Activated naive CD4-positive, alpha-beta T cell treated with anti-CD3 and anti-CD28 coated beads for 36 hours (primary cell): ENCODE measurements at regions of chr5 and their contacts with region 1.

Region 1: DNA sequence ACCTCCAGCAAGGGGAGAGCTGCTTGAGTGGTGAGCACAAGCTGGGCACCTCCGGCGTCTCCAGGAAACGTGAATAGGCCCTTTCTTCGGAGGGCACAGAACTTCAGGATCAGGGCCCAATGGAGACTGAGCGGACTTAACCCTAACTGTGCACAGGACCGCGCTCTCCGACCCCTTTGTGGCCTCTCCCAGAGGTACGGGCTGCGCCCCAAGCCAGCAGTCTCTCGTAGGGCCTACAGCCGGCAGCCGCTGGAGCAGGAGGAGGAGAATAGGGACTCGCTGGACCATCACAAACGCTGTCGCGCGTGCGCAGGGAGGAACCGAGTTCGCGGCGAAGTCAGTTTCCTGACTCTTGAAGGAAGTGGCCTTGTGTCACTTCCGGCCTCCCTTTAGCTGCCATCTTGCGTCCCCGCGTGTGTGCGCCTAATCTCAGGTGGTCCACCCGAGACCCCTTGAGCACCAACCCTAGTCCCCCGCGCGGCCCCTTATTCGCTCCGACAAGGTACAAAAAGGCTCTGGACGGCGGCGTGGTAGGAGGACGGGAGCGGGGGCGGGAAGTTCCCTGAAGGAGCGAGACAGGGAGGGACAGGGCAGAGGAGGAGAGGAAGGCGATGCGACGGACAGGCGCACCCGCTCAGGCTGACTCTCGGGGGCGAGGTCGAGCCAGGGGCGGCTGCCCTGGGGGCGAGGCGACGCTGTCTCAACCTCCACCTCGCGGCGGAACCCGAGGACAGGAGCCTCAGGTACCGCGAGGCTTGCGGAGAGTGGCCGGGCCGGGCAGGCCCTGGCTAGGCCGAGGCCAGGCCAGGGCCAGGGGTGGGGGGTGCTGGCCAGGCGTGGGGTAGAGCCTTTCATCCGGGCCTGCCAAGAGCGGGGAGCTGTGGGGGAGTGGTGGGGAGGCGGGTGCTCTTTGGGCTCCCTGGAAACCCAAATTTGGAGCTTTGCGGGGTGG is at the start of gene BTF3:
- DNase-seq: peak; percentile 95
- H3K4me3 Mint-ChIP-seq: peak within 1 kb of the TSS; percentile 97
- H3K27ac Mint-ChIP-seq: peak within 1 kb of the TSS; percentile 96
- H3K4me1 Mint-ChIP-seq: peaks cover 42% of the 10 kb centered on the region
- H3K27me3 Mint-ChIP-seq: peaks cover 3% of the 10 kb centered on the region
- total RNA-seq, gene BTF3: 1,100 to 1,123 TPM

Region 2: GRCh38 chr5:73540192-73540591 is 41.9 kb after region 1 on chr5:
- CTCF ChIA-PET with region 1: interaction called, 5 read pairs
- intact Hi-C with region 1: loop called (anchors 1 kb)
- DNase-seq: no peak
- H3K4me3 Mint-ChIP-seq: no peak overlapping the region
- H3K27ac Mint-ChIP-seq: no peak overlapping the region
- H3K4me1 Mint-ChIP-seq: no peaks in the 10 kb centered on the region
- H3K27me3 Mint-ChIP-seq: peaks cover 9% of the 10 kb centered on the region

Region 3: GRCh38 chr5:73565139-73565968 is 67.0 kb after region 1 on chr5 and contains the starts of genes ANKRA2 and UTP15:
- CTCF ChIA-PET with region 1: no interaction called
- intact Hi-C with region 1: loop called (anchors 1 kb)
- DNase-seq: peak; percentile 99
- H3K4me3 Mint-ChIP-seq: peak within 1 kb of the TSS; percentile 99
- H3K27ac Mint-ChIP-seq: peak within 1 kb of the TSS; percentile 99
- H3K4me1 Mint-ChIP-seq: peaks cover 38% of the 10 kb centered on the region
- H3K27me3 Mint-ChIP-seq: no peaks in the 10 kb centered on the region
- total RNA-seq, gene ANKRA2: 26.5 to 26.9 TPM
- total RNA-seq, gene UTP15: 25.3 to 28.5 TPM